CD4-positive, alpha-beta T cell (primary cell): ENCODE measurements at regions of chr11 and their contacts with region 1.

Region 1: DNA sequence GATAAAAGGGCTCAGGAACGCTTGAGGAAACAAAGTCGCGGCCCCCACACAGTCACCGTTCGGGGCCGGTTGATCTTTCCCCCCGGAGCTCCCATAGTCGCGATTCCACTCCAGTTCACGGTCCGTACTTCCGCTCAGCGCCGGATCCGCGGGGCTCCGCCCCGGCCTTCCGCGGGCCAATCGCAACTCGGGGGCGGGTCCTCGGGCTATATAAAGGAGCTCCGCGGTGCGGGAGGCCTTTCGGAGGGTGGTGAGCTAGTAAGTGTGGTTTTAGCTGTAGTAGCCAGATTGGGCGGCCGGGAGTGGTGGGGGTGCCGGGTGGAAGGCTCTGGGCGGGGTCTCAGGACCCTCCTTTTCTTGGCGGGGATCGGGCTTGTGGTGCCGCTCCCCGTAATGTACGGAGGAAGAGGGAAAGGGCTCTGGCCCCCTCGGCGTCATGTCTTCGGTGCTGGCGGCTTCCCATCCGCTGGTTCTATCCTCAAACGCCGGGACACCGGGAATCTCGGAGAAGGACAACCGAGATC is at the starts of genes C11orf98 and CSKMT:
- DNase-seq: peak; percentile 92 to 97 (median 94)
- ATAC-seq: peak; percentile 91
- H3K4me3 ChIP-seq: peak within 1 kb of the TSS; percentile 73
- H3K4me3 Mint-ChIP-seq: peak within 1 kb of the TSS; percentile 99
- H3K27ac ChIP-seq: peak within 1 kb of the TSS; percentile 80 to 88
- H3K27ac Mint-ChIP-seq: peak within 1 kb of the TSS; percentile 96
- H3K4me1 ChIP-seq: peaks cover 48% of the 10 kb centered on the region
- H3K4me1 Mint-ChIP-seq: peaks cover 36% of the 10 kb centered on the region
- H3K27me3 ChIP-seq: no peaks in the 10 kb centered on the region
- H3K27me3 Mint-ChIP-seq: no peaks in the 10 kb centered on the region
- CTCF ChIP-seq: no peak
- total RNA-seq, gene C11orf98: 14.3 to 18.5 TPM
- total RNA-seq, gene CSKMT: 17.8 to 18.8 TPM

Region 2: DNA sequence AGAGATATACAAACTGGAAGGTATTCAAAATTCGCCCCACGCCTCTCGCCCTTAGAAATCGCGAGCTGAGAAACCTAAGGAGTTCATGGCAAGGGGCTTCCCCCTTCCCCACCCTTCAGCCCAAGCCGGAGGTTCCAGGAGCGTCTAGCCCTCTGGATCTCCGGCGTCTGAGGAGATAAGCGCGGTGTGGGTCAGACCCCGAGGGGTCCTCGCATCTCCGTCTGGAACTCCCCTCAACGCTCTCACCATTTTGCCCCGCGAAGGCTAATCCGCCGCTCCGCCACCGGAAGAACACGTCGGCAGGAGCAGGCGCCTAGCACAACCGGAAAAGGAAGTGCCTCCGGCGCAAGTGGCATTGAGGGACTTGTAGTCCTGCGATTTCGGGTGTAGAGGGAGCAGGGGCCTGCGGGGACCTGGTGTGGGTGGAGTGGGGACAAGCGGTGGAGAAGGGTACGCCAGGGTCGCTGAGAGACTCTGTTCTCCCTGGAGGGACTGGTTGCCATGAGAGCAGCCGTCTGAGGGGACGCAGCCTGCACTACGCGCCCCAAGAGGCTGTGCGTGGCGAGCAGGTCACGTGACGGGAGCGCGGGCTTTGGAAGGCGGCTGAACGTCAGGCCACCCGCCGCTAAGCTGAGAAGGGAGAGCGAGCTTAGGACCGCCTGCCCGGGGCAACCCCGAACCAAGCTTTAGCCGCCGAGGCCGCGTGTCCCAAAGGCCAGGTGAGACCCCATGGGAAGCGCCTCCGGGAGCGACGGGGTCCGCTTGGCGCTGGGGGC is 872.6 kb before region 1 on chr11 and contains the starts of genes FEN1 and TMEM258:
- CTCF ChIA-PET with region 1: no interaction called
- POLR2A ChIA-PET with region 1: no interaction called
- intact Hi-C with region 1: loop called in 1 of 2 experiments (anchors 10 kb)
- DNase-seq: peak; percentile 74 to 94 (median 80)
- ATAC-seq: peak; percentile 88
- H3K4me3 ChIP-seq: peak within 1 kb of the TSS; percentile 87
- H3K4me3 Mint-ChIP-seq: peak within 1 kb of the TSS; percentile 94
- H3K27ac ChIP-seq: peak within 1 kb of the TSS; percentile 93 to 97
- H3K27ac Mint-ChIP-seq: peak within 1 kb of the TSS; percentile 95
- H3K4me1 ChIP-seq: peaks cover 34% of the 10 kb centered on the region
- H3K4me1 Mint-ChIP-seq: peaks cover 44% of the 10 kb centered on the region
- H3K27me3 ChIP-seq: no peaks in the 10 kb centered on the region
- H3K27me3 Mint-ChIP-seq: no peaks in the 10 kb centered on the region
- CTCF ChIP-seq: no peak
- total RNA-seq, gene FEN1: 7.5 to 9.1 TPM
- total RNA-seq, gene TMEM258: 55.2 to 56.0 TPM

Region 3: DNA sequence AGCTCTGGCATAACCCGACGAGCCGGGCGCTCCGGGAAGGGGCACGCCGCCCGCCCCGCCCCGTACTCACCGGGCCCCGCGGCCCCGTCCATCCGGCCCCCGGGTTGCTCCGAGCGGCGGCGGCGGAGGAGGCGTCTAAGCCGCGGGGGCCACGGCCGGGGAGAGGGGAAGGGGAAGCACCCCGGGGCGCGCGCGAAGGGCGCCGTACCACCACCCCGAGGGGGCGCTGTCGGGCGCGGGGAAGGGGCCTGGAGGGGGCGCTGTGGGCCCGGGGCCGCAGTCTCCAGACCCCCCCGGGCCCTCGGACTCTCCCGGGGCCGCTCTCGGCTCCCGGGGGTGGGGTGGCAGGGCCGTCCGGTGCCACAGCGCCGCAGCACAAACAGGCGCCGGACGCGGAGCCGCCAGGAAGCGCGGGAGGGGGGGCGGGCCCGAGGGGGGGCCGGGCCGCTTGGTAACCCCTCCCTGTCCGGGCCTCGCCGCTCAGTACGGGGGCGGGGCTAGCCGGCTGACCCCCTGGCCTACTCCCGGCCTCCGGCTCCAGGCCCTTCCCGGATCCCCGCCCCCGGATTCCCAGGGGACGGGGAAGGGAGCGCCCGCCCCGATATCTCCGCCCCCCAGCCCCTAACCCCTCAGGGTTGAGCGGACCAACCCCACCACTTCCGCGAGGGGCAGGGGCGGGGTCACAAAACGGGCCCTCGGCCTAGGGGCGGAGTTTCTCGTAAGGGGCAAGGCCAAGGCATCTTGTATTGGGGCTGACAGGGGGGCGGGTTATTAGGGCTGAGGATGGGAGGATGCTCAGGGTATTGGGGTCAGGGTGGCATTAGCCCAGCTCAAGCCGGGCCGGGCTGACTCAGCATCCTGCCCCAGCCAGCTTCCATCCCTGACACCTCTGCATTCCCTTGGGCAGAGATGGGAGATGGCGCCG is 52.5 kb before region 1 on chr11 and contains the starts of genes EML3 and ROM1:
- CTCF ChIA-PET with region 1: interaction called, 4 read pairs
- POLR2A ChIA-PET with region 1: interaction called, 66 read pairs
- intact Hi-C with region 1: no loop called
- DNase-seq: peak; percentile 77 to 94 (median 89)
- ATAC-seq: peak; percentile 76
- H3K4me3 ChIP-seq: peak within 1 kb of the TSS; percentile 92
- H3K4me3 Mint-ChIP-seq: peak within 1 kb of the TSS; percentile 90
- H3K27ac ChIP-seq: peak within 1 kb of the TSS; percentile 78 to 90
- H3K27ac Mint-ChIP-seq: peak within 1 kb of the TSS; percentile 94
- H3K4me1 ChIP-seq: peaks cover 63% of the 10 kb centered on the region
- H3K4me1 Mint-ChIP-seq: peaks cover 44% of the 10 kb centered on the region
- H3K27me3 ChIP-seq: no peaks in the 10 kb centered on the region
- H3K27me3 Mint-ChIP-seq: no peaks in the 10 kb centered on the region
- CTCF ChIP-seq: peak; percentile 87
- total RNA-seq, gene EML3: 142 to 144 TPM
- total RNA-seq, gene ROM1: 0.42 to 0.71 TPM

Region 4: GRCh38 chr11:62645956-62646824 is 18.9 kb before region 1 on chr11 and contains the start of gene GANAB:
- CTCF ChIA-PET with region 1: interaction called, 6 read pairs
- POLR2A ChIA-PET with region 1: interaction called, 77 read pairs
- intact Hi-C with region 1: loop called in 1 of 2 experiments (anchors 1 kb)
- DNase-seq: peak; percentile 97 to 100 (median 99)
- ATAC-seq: peak; percentile 98
- H3K4me3 ChIP-seq: peak within 1 kb of the TSS; percentile 98
- H3K4me3 Mint-ChIP-seq: peak within 1 kb of the TSS; percentile 96
- H3K27ac ChIP-seq: peak within 1 kb of the TSS; percentile 82 to 97
- H3K27ac Mint-ChIP-seq: peak within 1 kb of the TSS; percentile 99
- H3K4me1 ChIP-seq: peaks cover 42% of the 10 kb centered on the region
- H3K4me1 Mint-ChIP-seq: peaks cover 29% of the 10 kb centered on the region
- H3K27me3 ChIP-seq: no peaks in the 10 kb centered on the region
- H3K27me3 Mint-ChIP-seq: no peaks in the 10 kb centered on the region
- CTCF ChIP-seq: no peak
- total RNA-seq, gene GANAB: 181 to 182 TPM

Region 5: DNA sequence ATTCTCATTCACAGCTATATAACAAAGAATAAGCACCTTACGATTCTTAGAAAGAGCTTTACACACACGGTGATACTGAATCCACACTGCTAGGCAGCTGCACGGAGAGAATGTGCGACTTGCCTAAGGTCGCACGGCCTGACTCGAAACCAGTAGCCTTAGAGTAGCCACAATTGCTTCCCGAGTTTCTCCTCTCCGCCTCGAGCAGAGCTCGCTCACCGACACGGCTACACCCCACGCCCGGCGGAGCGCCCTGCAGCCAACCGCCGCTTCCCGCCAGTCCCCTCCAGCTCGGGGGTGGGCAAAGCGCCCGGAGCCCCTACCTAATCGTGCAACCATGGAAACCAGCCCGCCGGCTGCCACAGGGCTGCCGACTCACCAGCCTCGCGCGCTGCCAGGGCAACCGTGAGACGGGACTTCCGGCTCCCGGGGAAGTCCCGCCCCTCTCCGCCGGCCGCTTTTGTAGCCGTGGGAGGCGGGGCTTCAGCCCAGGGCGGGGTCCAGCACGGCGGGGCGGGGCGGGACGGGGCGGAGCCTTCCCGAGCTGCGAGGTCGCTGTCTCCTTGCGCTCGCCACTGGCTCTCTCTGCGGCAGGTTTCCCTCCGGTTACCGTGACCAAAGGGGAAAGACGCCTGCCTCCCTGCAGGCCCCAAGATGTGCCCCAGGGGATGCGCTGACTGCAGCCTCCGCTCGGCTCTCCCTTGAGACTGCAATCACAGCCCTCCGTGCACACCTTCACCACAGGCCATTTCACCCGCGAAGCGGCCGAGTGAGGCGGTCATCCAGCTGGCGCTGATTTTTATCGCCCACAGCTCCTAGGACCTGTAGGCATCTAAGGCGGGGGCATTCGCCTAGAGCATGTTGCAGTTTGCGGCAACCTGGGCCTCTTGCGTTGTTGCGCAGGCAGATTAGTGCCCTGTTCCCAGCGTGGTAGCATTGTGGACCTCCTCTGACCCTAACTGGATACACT is 41.0 kb after region 1 on chr11:
- CTCF ChIA-PET with region 1: no interaction called
- POLR2A ChIA-PET with region 1: interaction called, 41 read pairs
- intact Hi-C with region 1: loop called (anchors 5 kb)
- DNase-seq: peak; percentile 90 to 97 (median 94)
- ATAC-seq: peak; percentile 62
- H3K4me3 ChIP-seq: peak overlapping the region; percentile 79
- H3K4me3 Mint-ChIP-seq: peak overlapping the region; percentile 86
- H3K27ac ChIP-seq: peak overlapping the region; percentile 65 to 84
- H3K27ac Mint-ChIP-seq: peak overlapping the region; percentile 92
- H3K4me1 ChIP-seq: peaks cover 49% of the 10 kb centered on the region
- H3K4me1 Mint-ChIP-seq: peaks cover 42% of the 10 kb centered on the region
- H3K27me3 ChIP-seq: no peaks in the 10 kb centered on the region
- H3K27me3 Mint-ChIP-seq: no peaks in the 10 kb centered on the region
- CTCF ChIP-seq: no peak

Region 6: DNA sequence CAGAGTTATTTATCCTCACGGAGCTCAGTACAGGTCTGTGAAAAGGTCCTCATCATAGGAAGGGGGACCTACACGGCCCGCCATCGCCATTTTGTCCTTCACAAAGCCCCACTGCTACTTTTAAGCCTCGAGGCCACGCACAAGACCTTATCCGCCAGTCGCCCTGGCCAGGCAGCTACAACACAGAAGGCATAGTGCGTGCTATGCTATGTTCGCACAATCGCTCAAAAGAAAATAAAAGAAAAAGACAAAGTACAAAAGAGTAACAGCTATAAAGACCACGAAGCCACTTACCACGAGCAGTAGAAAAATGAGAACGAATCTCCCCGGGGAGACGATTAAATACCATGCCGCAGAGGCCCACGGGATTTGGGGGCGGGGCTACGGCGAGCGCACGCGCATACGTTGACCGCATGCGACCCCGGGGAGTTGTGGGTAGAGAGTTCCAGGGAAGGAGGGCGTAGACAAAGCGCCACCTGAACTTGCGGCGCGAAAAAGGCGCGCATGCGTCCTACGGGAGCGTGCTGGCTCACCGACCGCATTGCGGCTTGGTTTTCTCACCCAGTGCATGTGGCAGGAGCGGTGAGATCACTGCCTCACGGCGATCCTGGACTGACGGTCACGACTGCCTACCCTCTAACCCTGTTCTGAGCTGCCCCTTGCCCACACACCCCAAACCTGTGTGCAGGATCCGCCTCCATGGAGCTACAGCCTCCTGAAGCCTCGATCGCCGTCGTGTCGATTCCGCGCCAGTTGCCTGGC is 190.6 kb after region 1 on chr11:
- CTCF ChIA-PET with region 1: no interaction called
- POLR2A ChIA-PET with region 1: interaction called, 27 read pairs
- intact Hi-C with region 1: no loop called
- DNase-seq: peak; percentile 96 to 99 (median 98)
- ATAC-seq: peak; percentile 92
- H3K4me3 ChIP-seq: peak overlapping the region; percentile 79
- H3K4me3 Mint-ChIP-seq: peak overlapping the region; percentile 98
- H3K27ac ChIP-seq: peak overlapping the region; percentile 66 to 72
- H3K27ac Mint-ChIP-seq: peak overlapping the region; percentile 90
- H3K4me1 ChIP-seq: peaks cover 41% of the 10 kb centered on the region
- H3K4me1 Mint-ChIP-seq: peaks cover 63% of the 10 kb centered on the region
- H3K27me3 ChIP-seq: no peaks in the 10 kb centered on the region
- H3K27me3 Mint-ChIP-seq: no peaks in the 10 kb centered on the region
- CTCF ChIP-seq: no peak